HEK293T (cell line): ENCODE measurements at regions of chr6 and their contacts with region 1.

Region 1: DNA sequence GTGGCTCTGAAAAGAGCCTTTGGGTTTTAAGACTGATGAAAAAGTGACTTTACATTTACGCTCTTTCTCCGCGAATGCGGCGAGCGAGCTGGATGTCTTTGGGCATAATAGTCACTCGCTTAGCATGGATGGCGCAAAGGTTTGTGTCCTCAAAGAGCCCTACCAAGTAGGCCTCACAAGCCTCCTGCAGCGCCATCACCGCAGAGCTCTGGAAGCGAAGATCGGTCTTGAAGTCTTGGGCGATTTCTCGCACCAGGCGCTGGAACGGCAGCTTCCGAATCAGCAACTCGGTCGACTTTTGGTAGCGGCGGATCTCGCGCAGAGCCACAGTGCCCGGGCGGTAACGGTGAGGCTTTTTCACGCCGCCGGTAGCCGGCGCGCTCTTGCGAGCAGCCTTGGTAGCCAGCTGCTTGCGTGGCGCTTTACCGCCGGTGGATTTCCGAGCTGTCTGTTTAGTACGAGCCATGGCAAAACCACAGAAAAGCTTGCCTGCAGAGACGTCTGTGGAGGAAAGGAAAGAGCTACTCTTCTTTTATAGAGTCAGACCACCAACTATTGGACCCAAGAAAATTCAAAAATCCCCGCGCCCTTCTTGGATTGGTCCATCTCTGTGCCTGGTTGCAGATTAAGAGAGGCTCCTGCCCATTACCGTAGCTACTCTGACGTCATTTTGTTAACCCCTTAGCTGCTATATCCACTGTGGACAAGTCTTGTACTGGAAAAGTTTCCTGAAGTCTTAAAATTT is 55.5 kb upstream of the HFE start:
- DNase-seq: peak; percentile 85

Region 2: DNA sequence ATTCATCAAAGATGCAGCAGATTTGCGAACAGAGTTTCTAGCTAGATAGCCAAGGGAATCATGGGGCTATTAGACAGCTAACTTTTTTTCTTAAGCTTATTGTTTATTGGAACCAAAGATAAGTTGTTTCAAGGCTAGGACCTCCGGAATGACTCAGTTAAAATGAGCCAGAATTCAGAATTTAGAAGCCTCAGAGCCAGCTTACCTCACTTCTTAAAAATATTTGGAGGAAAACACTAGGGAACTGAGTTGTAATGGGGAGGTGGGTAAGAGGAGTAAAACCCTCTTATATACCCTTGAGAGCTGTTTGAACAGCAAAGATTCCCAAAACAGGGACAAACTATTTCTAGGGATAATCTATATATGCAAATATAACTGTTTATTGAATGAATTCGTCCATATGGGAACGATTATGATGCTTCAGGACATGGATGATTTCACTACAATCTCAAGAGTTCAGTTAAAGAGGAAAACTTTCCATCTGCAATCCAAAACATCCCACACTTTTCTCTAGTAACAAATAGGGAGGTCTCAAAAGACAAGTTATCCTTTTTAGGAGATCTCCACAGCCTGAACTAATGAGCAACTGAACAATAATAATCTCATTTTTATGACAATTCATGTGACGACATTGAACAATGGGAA is 765.2 kb before region 1 on chr6:
- CTCF ChIA-PET with region 1: no interaction called
- POLR2A ChIA-PET with region 1: no interaction called
- DNase-seq: no peak

Region 3: GRCh38 chr6:26045065-26045927 is 13.5 kb after region 1 on chr6:
- CTCF ChIA-PET with region 1: interaction called, 6 read pairs
- POLR2A ChIA-PET with region 1: interaction called, 715 read pairs
- DNase-seq: no peak

Region 4: GRCh38 chr6:26103770-26104456 is 72.1 kb after region 1 on chr6:
- CTCF ChIA-PET with region 1: no interaction called
- POLR2A ChIA-PET with region 1: interaction called, 41 read pairs
- DNase-seq: peak; percentile 70

Region 5: DNA sequence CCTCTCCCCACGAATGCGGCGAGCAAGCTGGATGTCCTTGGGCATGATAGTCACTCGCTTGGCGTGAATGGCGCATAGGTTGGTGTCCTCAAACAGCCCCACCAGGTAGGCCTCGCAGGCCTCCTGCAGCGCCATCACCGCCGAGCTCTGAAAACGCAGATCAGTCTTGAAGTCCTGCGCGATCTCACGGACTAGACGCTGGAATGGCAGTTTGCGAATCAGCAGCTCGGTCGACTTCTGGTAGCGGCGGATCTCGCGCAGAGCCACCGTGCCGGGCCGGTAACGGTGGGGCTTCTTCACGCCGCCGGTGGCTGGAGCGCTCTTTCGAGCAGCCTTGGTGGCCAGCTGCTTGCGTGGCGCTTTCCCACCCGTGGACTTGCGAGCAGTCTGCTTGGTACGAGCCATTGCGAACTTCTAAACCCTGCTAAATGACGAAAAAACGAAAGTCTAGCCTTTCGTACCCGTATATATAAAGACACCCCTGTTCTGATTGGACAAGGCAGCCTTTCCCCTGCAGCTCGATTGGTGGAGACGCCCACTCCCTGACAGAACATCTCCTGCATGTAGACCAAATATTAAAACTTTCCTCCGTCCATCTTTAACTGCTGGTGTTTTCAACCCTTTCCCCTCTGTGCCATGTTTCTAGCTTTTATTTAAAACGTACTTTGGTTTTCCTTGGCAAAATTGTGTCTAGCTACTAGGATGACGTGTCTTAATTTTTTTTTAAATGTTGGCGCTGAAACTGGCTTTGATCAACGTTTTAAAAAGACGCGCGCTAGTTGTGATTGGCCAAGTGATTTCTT is 165.3 kb after region 1 on chr6:
- CTCF ChIA-PET with region 1: no interaction called
- POLR2A ChIA-PET with region 1: interaction called, 44 read pairs
- DNase-seq: no peak

Region 6: GRCh38 chr6:26234421-26235296 is 202.9 kb after region 1 on chr6:
- CTCF ChIA-PET with region 1: no interaction called
- POLR2A ChIA-PET with region 1: interaction called, 11 read pairs
- DNase-seq: peak; percentile 72

Region 7: GRCh38 chr6:27809939-27810767 is 1778.4 kb after region 1 on chr6:
- CTCF ChIA-PET with region 1: no interaction called
- POLR2A ChIA-PET with region 1: interaction called, 15 read pairs
- DNase-seq: peak; percentile 76